Calu3 (cell line): ENCODE measurements at regions of chr1 and their contacts with region 1.

Region 1: DNA sequence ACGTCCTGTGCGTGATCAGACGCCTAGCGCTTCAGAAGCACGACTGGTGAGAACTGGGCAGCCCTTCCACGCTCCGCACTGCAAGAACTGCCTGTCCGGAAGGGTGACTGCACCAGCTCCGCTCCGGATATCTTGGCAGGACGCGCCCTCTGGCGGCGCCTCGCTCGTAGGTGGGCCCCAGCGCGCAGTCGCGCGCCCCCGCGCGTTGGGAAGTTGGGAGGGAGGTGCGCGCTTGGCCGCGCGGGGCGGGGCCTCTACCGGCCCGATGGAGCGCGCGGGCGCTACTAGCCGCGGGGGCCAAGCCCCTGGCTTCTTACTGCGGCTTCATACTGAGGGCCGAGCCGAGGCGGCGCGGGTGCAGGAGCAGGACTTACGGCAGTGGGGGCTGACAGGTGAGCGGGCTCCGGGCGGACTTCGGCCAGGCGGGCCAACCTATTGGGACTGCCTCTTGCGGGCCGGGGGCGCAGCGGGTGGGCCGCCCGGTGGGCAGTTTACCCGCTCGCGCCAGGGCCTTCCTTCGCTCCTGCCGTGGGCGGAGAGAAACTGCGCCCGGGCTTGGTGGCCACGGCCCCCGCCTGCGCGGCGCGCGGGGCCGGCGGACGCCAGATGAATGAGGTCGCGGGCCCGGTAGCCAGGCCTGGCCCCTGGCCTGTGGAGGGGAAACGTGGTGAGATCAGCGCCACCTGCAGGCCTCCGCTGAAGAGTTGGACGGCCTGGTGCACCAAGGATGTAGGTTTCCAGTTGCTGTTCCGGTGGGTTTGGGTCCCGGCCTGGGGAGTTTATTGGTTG is at the start of gene CHD1L:
- DNase-seq: peak; percentile 97
- H3K4me3 Mint-ChIP-seq: peak within 1 kb of the TSS; percentile 67
- H3K27ac Mint-ChIP-seq: peak within 1 kb of the TSS; percentile 35
- H3K4me1 Mint-ChIP-seq: peaks cover 59% of the 10 kb centered on the region
- H3K27me3 Mint-ChIP-seq: no peaks in the 10 kb centered on the region
- CTCF ChIP-seq: peak; percentile 93
- total RNA-seq, gene CHD1L: 32.6 and 34.2 TPM in 2 replicates

Region 2: DNA sequence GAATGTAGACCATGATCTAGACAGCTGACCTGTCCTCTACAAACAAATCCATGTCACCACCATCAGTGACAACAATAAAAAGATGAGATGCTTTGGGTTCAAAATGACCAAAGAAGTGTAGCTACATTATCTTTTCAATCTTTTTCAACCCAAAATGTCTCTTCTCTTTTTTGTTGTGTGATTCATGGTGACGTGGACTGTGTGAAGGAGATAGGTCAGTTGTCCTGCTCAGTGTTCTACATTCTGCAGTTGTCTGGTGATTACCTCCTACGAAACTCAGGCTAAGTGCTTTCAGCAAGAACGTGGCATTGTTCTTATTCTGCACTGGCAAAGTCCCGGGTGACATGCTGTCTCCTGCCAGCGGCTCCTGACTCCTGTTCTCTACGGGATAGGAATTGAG is 143.4 kb before region 1 on chr1:
- CTCF ChIA-PET with region 1: no interaction called
- intact Hi-C with region 1: loop called (anchors 5 kb)
- DNase-seq: no peak
- H3K4me3 Mint-ChIP-seq: no peak overlapping the region
- H3K27ac Mint-ChIP-seq: no peak overlapping the region
- H3K4me1 Mint-ChIP-seq: no peaks in the 10 kb centered on the region
- H3K27me3 Mint-ChIP-seq: peaks cover 61% of the 10 kb centered on the region
- CTCF ChIP-seq: no peak

Region 3: DNA sequence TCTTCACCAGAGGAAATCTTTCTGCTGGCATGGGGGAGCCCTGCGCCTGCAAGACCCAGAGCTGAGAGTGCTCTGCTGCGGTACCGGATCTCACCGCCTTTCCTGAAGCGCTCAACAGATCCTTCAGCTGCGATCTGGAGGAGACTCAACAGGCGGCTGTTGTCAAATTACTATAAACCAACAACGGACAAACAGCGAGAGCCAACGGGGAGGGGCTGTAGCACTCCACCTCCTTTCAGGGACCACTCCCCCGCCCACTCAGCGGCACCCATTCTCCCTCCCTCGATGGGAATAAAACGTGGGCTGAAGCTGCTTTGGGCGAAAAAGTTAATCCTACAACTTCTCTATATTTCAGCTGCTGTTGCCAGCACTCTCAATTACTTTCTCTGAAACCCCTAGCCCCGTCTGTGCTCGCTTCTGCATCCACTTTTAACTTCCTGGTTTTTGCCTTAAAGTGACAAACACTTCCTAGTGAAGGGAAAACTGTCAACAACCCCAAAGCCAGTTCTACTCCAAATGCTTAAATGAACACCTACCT is 17.4 kb before region 1 on chr1 and contains the start of gene FMO5:
- CTCF ChIA-PET with region 1: interaction called, 4 read pairs
- intact Hi-C with region 1: loop called (anchors 2 kb)
- DNase-seq: peak; percentile 58
- H3K4me3 Mint-ChIP-seq: peak within 1 kb of the TSS; percentile 91
- H3K27ac Mint-ChIP-seq: peak within 1 kb of the TSS; percentile 47
- H3K4me1 Mint-ChIP-seq: peaks cover 22% of the 10 kb centered on the region
- H3K27me3 Mint-ChIP-seq: peaks cover 14% of the 10 kb centered on the region
- CTCF ChIP-seq: no peak
- total RNA-seq, gene FMO5: 0.61 and 1.0 TPM in 2 replicates